ENCODE measurements at regions of chr1 and their contacts with region 1.

Region 1: GRCh38 chr1:118898712-118899111 is 89.4 kb downstream of the TBX15 start:
- DNase-seq: no peak
- ATAC-seq: no peak
- H3K4me3 ChIP-seq: no peak overlapping the region
- H3K27ac ChIP-seq: no peak overlapping the region
- H3K4me1 ChIP-seq: no peaks in the 10 kb centered on the region
- H3K27me3 ChIP-seq: no peaks in the 10 kb centered on the region
- CTCF ChIP-seq: no peak
- POLR2A ChIP-seq: no peak

Region 2: DNA sequence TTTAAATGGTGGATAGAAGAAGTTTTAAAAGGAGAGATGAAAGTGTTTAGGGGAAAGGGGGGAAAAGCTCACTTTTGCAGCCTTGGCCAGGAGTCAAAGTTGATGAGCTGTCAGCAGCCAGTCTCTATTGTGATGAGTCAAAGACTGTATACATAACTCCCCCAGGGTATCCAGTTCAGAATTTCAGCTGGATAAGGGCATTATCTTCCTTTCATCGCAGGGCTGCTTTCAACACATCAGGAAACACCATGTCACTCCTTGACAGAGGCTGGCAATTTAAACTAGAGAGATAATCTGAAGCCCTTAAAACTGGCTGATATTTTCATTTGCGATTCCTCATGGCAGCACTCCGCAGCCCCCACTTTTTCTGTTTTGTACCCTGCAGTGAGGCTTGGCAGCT is 239.1 kb before region 1 on chr1:
- intact Hi-C with region 1: no loop called
- DNase-seq: no peak
- ATAC-seq: peak in 1 of 4 donors; percentile 64
- H3K4me3 ChIP-seq: no peak overlapping the region
- H3K27ac ChIP-seq: no peak overlapping the region
- H3K4me1 ChIP-seq: peaks cover 0 to 9% (median 0%) of the 10 kb centered on the region in 12 donors
- H3K27me3 ChIP-seq: no peaks in the 10 kb centered on the region
- CTCF ChIP-seq: no peak
- POLR2A ChIP-seq: no peak

Region 3: DNA sequence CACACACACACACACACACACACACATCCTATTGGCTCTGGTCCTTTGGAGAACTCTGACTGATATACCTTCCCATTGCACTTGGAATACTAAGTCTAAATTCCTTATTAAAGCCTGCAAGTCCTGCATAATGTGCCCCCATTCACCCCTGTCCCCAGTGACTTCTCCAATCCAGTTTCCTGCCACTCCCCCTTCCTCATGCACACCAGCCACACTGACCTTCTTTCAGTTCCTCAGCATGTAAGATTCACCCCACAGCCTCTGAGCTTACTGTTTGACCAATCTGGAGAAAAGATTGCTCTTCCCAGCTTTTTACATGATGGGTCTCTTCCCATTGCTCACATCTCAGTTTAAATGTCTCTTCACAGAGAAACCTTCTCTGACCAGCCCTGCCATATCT is 57.2 kb before region 1 on chr1:
- intact Hi-C with region 1: loop called in 1 of 10 experiments (anchors 2 kb)
- DNase-seq: no peak
- ATAC-seq: no peak
- H3K4me3 ChIP-seq: no peak overlapping the region
- H3K27ac ChIP-seq: no peak overlapping the region
- H3K4me1 ChIP-seq: no peaks in the 10 kb centered on the region
- H3K27me3 ChIP-seq: no peaks in the 10 kb centered on the region
- CTCF ChIP-seq: no peak
- POLR2A ChIP-seq: no peak

Region 4: DNA sequence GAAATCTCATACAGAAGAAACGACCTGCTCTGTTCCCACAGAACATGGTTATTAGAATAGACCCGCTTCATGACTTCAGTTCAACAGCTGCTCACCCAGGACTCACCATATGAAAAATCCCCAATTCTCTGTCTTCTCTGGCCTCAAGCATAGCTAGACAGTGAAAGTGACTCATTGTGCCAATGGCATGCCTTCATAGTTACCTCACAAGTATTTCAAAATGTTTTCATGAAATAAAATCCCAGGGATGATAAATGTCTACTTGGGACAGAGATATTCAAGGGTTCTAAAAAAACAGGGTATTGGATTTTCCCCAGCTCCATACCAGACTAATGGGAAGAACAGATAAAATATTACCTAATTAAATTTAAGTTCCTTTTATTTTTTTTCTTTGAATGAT is 1088.4 kb after region 1 on chr1:
- intact Hi-C with region 1: no loop called
- DNase-seq: peak in 1 of 5 donors; percentile 28
- ATAC-seq: peak in 3 of 4 donors; percentile 53 to 96 (median 89)
- H3K4me3 ChIP-seq: no peak overlapping the region
- H3K27ac ChIP-seq: peak overlapping the region in 6 of 12 donors; percentile 8 to 52 (median 23)
- H3K4me1 ChIP-seq: peaks cover 0 to 35% (median 13%) of the 10 kb centered on the region in 12 donors
- H3K27me3 ChIP-seq: no peaks in the 10 kb centered on the region
- CTCF ChIP-seq: no peak
- POLR2A ChIP-seq: no peak